Activated CD4-positive, alpha-beta T cell treated with anti-CD3 and anti-CD28 coated beads for 36 hours (primary cell): ENCODE measurements at regions of chr6 and their contacts with region 1.

Region 1: DNA sequence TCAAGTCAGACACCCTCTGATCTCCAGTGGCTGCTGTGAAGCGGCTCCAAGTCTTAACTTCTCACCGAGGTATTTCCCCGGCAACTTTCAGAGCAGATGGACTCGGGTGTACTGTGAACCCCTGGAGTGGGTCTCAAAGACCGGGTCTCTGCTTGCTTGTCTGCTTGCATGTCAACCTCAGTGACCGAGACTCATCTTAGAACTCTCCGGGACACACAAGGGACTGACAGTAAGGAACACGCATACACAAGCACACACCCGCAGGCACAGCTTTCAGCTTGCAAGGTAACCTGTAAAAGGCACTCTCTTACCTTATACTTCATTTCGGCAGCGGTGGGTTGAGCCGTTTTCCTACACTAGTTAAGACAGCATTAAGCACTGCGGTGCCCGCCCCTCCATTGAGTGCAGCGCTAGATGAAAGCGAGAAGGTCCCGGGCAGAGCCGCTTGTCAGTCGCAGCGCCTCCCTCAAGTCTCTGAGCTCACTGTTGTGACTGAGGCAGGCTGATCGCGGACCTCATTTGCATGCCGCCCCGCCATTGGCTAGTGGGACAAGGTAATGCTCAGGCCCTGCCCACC is at the start of gene NEDD9:
- DNase-seq: peak; percentile 97
- ATAC-seq: peak; percentile 96
- H3K4me3 Mint-ChIP-seq: peak within 1 kb of the TSS; percentile 81
- H3K27ac Mint-ChIP-seq: peak within 1 kb of the TSS; percentile 95
- H3K4me1 Mint-ChIP-seq: peaks cover 65% of the 10 kb centered on the region
- H3K27me3 Mint-ChIP-seq: no peaks in the 10 kb centered on the region
- total RNA-seq, gene NEDD9: 23.6 to 27.3 TPM

Region 2: GRCh38 chr6:10995114-10995707 is 237.1 kb before region 1 on chr6:
- CTCF ChIA-PET with region 1: no interaction called
- POLR2A ChIA-PET with region 1: no interaction called
- intact Hi-C with region 1: no loop called
- DNase-seq: no peak
- ATAC-seq: no peak
- H3K4me3 Mint-ChIP-seq: no peak overlapping the region
- H3K27ac Mint-ChIP-seq: no peak overlapping the region
- H3K4me1 Mint-ChIP-seq: no peaks in the 10 kb centered on the region
- H3K27me3 Mint-ChIP-seq: peaks cover 3% of the 10 kb centered on the region

Region 3: GRCh38 chr6:11277275-11278206 is 45.3 kb after region 1 on chr6:
- CTCF ChIA-PET with region 1: interaction called, 6 read pairs
- POLR2A ChIA-PET with region 1: interaction called, 7 read pairs
- intact Hi-C with region 1: loop called (anchors 2 kb)
- DNase-seq: peak; percentile 53
- ATAC-seq: peak; percentile 76
- H3K4me3 Mint-ChIP-seq: peak overlapping the region; percentile 40
- H3K27ac Mint-ChIP-seq: peak overlapping the region; percentile 91
- H3K4me1 Mint-ChIP-seq: peaks cover 46% of the 10 kb centered on the region
- H3K27me3 Mint-ChIP-seq: no peaks in the 10 kb centered on the region

Region 4: GRCh38 chr6:11381801-11382513 is 149.7 kb after region 1 on chr6:
- CTCF ChIA-PET with region 1: interaction called, 3 read pairs
- POLR2A ChIA-PET with region 1: no interaction called
- intact Hi-C with region 1: loop called (anchors 1 to 2 kb)
- DNase-seq: peak; percentile 80
- ATAC-seq: peak; percentile 93
- H3K4me3 Mint-ChIP-seq: peak overlapping the region; percentile 78
- H3K27ac Mint-ChIP-seq: peak overlapping the region; percentile 88
- H3K4me1 Mint-ChIP-seq: peaks cover 56% of the 10 kb centered on the region
- H3K27me3 Mint-ChIP-seq: peaks cover 2% of the 10 kb centered on the region